Right ventricle myocardium inferior (tissue), 1 donor: ENCODE measurements at regions of chr21 and their contacts with region 1.

Region 1: DNA sequence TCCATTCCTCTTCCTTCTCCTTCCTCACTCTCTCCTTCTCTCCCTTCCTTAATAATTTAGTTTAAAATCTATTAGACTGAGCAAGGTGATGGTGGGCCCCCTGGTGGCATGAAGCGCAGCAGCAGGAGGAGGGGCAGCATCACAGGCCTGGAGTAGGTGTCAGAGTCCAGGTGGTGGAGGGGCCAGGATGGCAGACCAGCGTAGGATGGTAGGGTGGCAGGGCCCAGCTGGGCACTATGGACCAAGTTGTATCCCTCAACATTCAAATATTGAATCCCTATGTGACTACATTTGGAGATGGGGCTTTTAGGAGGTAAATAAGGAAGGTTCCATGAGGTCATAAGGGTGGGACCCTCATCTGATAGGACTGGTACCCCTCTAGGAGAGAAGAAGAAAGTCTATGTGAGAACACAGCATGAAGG is 61.0 kb downstream of the WDR4 start:
- DNase-seq: no peak
- ATAC-seq: peak; percentile 60

Region 2: DNA sequence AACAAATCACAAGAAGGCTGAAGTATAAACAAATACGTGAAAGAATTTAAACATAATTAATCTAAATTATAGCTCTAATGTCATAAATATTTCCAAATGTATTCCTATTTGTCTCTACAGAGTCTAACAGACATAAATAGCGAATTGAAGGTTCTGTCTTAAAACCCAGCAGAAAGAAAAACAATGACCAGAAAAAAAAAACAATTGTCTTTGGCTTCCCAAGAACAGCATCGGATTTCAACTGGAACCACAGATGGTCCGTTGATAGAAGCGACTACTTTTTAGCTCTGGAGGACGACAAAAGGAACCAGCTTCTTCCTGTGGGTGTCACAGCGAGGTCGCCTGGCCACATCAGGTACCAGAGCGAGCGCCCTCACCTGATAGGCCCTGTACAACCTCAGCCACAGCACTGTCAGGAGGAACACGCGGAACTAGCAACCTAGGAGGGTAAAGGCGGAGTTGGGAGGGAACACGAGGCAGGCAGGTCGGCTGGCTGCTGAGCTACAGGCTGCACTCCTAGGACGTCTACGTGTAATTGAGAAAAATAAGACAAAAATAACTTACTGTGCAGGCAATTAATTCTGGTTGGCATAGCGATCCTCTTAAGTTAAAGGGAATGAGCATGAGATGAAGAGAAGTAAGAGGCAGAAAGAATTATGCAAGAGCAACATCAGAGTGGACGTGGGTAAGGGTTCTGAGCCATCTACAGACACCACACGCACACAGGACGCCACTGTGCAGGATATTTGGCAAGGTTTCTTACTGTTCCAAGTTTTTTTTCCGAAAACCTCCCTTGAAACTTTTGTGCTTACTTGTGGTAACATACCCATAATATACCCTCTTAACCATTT is 922.5 kb before region 1 on chr21:
- intact Hi-C with region 1: no loop called
- DNase-seq: no peak
- ATAC-seq: no peak

Region 3: GRCh38 chr21:42593007-42593806 is 225.1 kb before region 1 on chr21:
- intact Hi-C with region 1: loop called (anchors 2 kb)
- DNase-seq: peak; percentile 85
- ATAC-seq: peak; percentile 85

Region 4: GRCh38 chr21:42652527-42653230 is 165.7 kb before region 1 on chr21:
- intact Hi-C with region 1: loop called (anchors 1 kb)
- DNase-seq: no peak
- ATAC-seq: peak; percentile 73